ENCODE measurements at regions of chr12 and their contacts with region 1.

Region 1: GRCh38 chr12:43147878-43148277 is 404.1 kb downstream of the ADAMTS20 start:
- DNase-seq: no peak
- ATAC-seq: no peak
- H3K4me3 ChIP-seq: no peak overlapping the region
- H3K27ac ChIP-seq: no peak overlapping the region
- H3K4me1 ChIP-seq: no peaks in the 10 kb centered on the region
- H3K27me3 ChIP-seq: no peaks in the 10 kb centered on the region
- CTCF ChIP-seq: no peak
- POLR2A ChIP-seq: no peak

Region 2: DNA sequence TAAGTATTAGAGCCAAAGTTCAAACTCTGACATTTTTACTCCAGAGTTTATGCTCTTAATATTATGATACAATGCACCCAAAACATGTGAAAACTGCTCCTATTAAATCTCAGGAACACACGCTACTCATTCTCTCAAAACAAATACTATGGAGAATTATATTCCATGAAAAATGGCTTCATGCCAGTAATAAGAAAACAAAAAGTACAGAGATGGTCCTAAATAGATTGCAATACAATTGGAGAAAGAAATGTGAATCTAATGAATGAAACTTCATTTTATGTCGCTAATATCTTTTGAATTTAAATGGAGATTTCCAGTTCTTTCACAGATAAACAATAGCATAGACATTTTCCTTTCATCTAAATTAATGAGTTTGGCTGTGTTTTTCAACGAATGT is 19.8 kb after region 1 on chr12:
- intact Hi-C with region 1: loop called in 1 of 10 experiments (anchors 2 kb)
- DNase-seq: no peak
- ATAC-seq: no peak
- H3K4me3 ChIP-seq: no peak overlapping the region
- H3K27ac ChIP-seq: no peak overlapping the region
- H3K4me1 ChIP-seq: no peaks in the 10 kb centered on the region
- H3K27me3 ChIP-seq: no peaks in the 10 kb centered on the region
- CTCF ChIP-seq: no peak
- POLR2A ChIP-seq: no peak

Measured in heart left ventricle (tissue), 16 donors.